ENCODE measurements at regions of chr6 and their contacts with region 1.

Region 1: DNA sequence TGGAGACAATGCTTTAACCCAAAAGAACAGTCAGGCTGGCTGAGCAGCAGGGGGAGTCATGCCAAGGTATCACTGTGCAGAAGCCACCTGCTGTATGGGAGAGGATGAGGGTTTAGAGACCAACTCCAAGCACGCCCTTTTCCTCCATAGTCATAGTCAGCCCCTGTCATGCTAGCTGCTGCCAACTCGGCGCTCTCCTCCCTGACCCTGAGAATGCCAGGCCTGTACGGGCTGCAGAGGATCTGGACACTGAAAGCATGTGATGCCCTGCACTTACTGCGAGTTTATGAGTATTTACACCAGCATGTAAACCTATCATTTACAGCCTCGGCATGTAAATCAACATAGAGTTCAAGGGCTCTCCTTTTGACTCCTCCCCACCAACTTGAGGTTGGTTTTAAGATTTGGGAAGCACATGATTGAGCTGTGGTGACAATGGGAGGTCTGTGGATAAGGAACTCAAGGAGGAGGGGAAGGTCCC is 11.7 kb upstream of the SCUBE3 start:
- DNase-seq: no peak
- H3K4me3 ChIP-seq: no peak overlapping the region
- H3K27ac ChIP-seq: no peak overlapping the region
- H3K4me1 ChIP-seq: peaks cover 0 to 14% (median 1%) of the 10 kb centered on the region in 4 donors
- H3K27me3 ChIP-seq: peaks cover 20% of the 10 kb centered on the region
- CTCF ChIP-seq: no peak
- EP300 ChIP-seq: no peak
- POLR2A ChIP-seq: no peak

Region 2: DNA sequence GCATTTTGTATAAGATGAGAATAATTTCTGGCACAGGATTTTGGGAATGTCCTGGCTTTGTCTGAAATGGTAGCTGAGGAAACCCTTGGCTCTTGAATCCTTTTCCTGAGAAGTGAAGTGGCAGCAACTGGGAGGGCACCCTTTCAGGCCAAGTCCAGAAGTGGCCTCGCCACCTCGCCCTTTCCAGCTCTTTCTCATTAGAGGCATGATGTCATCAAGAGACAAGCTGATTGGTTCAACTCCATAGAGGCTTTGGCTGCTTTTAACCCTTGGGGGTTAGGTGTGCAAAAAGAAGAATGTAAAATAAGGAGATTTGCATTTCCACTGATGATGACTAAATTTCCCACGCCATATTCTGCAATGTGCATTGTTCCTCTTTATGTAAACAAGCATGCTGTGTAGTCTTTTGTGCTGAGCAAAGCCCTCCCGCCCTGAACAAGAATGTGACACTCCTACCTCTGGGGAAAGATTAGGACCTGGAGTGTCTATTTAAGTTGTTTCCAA is 177.5 kb before region 1 on chr6:
- in situ Hi-C with region 1: no loop called
- intact Hi-C with region 1: no loop called
- DNase-seq: peak; percentile 56
- H3K4me3 ChIP-seq: no peak overlapping the region
- H3K27ac ChIP-seq: peak overlapping the region; percentile 78 to 93 (median 92)
- H3K4me1 ChIP-seq: peaks cover 37 to 74% (median 49%) of the 10 kb centered on the region in 4 donors
- H3K27me3 ChIP-seq: no peaks in the 10 kb centered on the region
- CTCF ChIP-seq: peak in 2 of 5 experiments; percentile 31 to 43
- EP300 ChIP-seq: no peak
- POLR2A ChIP-seq: no peak

Region 3: GRCh38 chr6:35149891-35150566 is 52.1 kb before region 1 on chr6:
- in situ Hi-C with region 1: no loop called
- intact Hi-C with region 1: loop called (anchors 2 kb)
- DNase-seq: no peak
- H3K4me3 ChIP-seq: no peak overlapping the region
- H3K27ac ChIP-seq: no peak overlapping the region
- H3K4me1 ChIP-seq: peaks cover 0 to 4% (median 0%) of the 10 kb centered on the region in 4 donors
- H3K27me3 ChIP-seq: no peaks in the 10 kb centered on the region
- CTCF ChIP-seq: no peak
- EP300 ChIP-seq: no peak
- POLR2A ChIP-seq: no peak

Region 4: GRCh38 chr6:35342258-35343091 is 140.4 kb after region 1 on chr6 and contains the start of gene PPARD:
- in situ Hi-C with region 1: no loop called
- intact Hi-C with region 1: no loop called
- DNase-seq: peak; percentile 99
- H3K4me3 ChIP-seq: peak within 1 kb of the TSS; percentile 80 to 99 (median 94)
- H3K27ac ChIP-seq: peak within 1 kb of the TSS; percentile 88 to 96 (median 90)
- H3K4me1 ChIP-seq: peaks cover 4 to 30% (median 13%) of the 10 kb centered on the region in 4 donors
- H3K27me3 ChIP-seq: peaks cover 2% of the 10 kb centered on the region
- CTCF ChIP-seq: peak; percentile 95 to 99 (median 97)
- EP300 ChIP-seq: no peak
- POLR2A ChIP-seq: peak; percentile 81
- total RNA-seq, gene PPARD: 19.8 to 110 (median 29.3) TPM